CD8-positive, alpha-beta memory T cell (primary cell): ENCODE measurements at regions of chr9 and their contacts with region 1.

Region 1: GRCh38 chr9:121201738-121202533 is at the start of gene RAB14:
- DNase-seq: peak; percentile 100
- H3K4me3 ChIP-seq: peak within 1 kb of the TSS; percentile 97
- H3K4me3 Mint-ChIP-seq: peak within 1 kb of the TSS; percentile 94 to 99 (median 97)
- H3K27ac ChIP-seq: peak within 1 kb of the TSS; percentile 79
- H3K27ac Mint-ChIP-seq: peak within 1 kb of the TSS; percentile 94 to 99 (median 96)
- H3K4me1 ChIP-seq: peaks cover 38% of the 10 kb centered on the region
- H3K4me1 Mint-ChIP-seq: peaks cover 45 to 53% (median 50%) of the 10 kb centered on the region in 3 donors
- H3K27me3 ChIP-seq: no peaks in the 10 kb centered on the region
- H3K27me3 Mint-ChIP-seq: peaks cover 0 to 7% of the 10 kb centered on the region in 2 donors
- total RNA-seq, gene RAB14: 81.7 to 85.4 TPM

Region 2: GRCh38 chr9:120792898-120793765 is 408.8 kb before region 1 on chr9 and contains the start of gene FBXW2:
- CTCF ChIA-PET with region 1: no interaction called
- POLR2A ChIA-PET with region 1: interaction called, 12 read pairs
- DNase-seq: peak; percentile 79 to 87 (median 82)
- H3K4me3 ChIP-seq: peak within 1 kb of the TSS; percentile 84
- H3K4me3 Mint-ChIP-seq: peak within 1 kb of the TSS; percentile 89 to 97 (median 91)
- H3K27ac ChIP-seq: peak within 1 kb of the TSS; percentile 92
- H3K27ac Mint-ChIP-seq: peak within 1 kb of the TSS; percentile 89 to 98 (median 96)
- H3K4me1 ChIP-seq: peaks cover 39% of the 10 kb centered on the region
- H3K4me1 Mint-ChIP-seq: peaks cover 46 to 61% (median 61%) of the 10 kb centered on the region in 3 donors
- H3K27me3 ChIP-seq: no peaks in the 10 kb centered on the region
- H3K27me3 Mint-ChIP-seq: no peaks in the 10 kb centered on the region
- total RNA-seq, gene FBXW2: 73.2 to 73.4 TPM

Region 3: GRCh38 chr9:121156263-121156731 is 45.6 kb before region 1 on chr9:
- CTCF ChIA-PET with region 1: no interaction called
- POLR2A ChIA-PET with region 1: no interaction called
- DNase-seq: peak in 2 of 5 donors; percentile 8 to 34
- H3K4me3 ChIP-seq: no peak overlapping the region
- H3K4me3 Mint-ChIP-seq: peak overlapping the region in 1 of 7 donors; percentile 26
- H3K27ac ChIP-seq: no peak overlapping the region
- H3K27ac Mint-ChIP-seq: peak overlapping the region; percentile 7 to 93 (median 76)
- H3K4me1 ChIP-seq: peaks cover 6% of the 10 kb centered on the region
- H3K4me1 Mint-ChIP-seq: peaks cover 34 to 38% (median 36%) of the 10 kb centered on the region in 3 donors
- H3K27me3 ChIP-seq: no peaks in the 10 kb centered on the region
- H3K27me3 Mint-ChIP-seq: no peaks in the 10 kb centered on the region

Region 4: GRCh38 chr9:121213136-121213806 is 11.3 kb after region 1 on chr9:
- CTCF ChIA-PET with region 1: interaction called, 17 read pairs
- POLR2A ChIA-PET with region 1: no interaction called
- DNase-seq: peak; percentile 42 to 73 (median 46)
- H3K4me3 ChIP-seq: no peak overlapping the region
- H3K4me3 Mint-ChIP-seq: no peak overlapping the region
- H3K27ac ChIP-seq: no peak overlapping the region
- H3K27ac Mint-ChIP-seq: peak overlapping the region in 2 of 8 donors; percentile 43 to 57
- H3K4me1 ChIP-seq: peaks cover 5% of the 10 kb centered on the region
- H3K4me1 Mint-ChIP-seq: peaks cover 4 to 6% (median 6%) of the 10 kb centered on the region in 3 donors
- H3K27me3 ChIP-seq: no peaks in the 10 kb centered on the region
- H3K27me3 Mint-ChIP-seq: peaks cover 0 to 1% of the 10 kb centered on the region in 2 donors